ENCODE measurements at regions of chr19 and their contacts with region 1.

Region 1: GRCh38 chr19:39187559-39187957 is 9.2 kb upstream of the NCCRP1 start:
- DNase-seq: no peak
- ATAC-seq: peak in 3 of 4 donors; percentile 11 to 31 (median 22)
- H3K4me3 ChIP-seq: no peak overlapping the region
- H3K27ac ChIP-seq: no peak overlapping the region
- H3K4me1 ChIP-seq: no peaks in the 10 kb centered on the region
- H3K27me3 ChIP-seq: no peaks in the 10 kb centered on the region
- CTCF ChIP-seq: peak in 1 of 4 donors; percentile 2
- POLR2A ChIP-seq: no peak

Region 2: DNA sequence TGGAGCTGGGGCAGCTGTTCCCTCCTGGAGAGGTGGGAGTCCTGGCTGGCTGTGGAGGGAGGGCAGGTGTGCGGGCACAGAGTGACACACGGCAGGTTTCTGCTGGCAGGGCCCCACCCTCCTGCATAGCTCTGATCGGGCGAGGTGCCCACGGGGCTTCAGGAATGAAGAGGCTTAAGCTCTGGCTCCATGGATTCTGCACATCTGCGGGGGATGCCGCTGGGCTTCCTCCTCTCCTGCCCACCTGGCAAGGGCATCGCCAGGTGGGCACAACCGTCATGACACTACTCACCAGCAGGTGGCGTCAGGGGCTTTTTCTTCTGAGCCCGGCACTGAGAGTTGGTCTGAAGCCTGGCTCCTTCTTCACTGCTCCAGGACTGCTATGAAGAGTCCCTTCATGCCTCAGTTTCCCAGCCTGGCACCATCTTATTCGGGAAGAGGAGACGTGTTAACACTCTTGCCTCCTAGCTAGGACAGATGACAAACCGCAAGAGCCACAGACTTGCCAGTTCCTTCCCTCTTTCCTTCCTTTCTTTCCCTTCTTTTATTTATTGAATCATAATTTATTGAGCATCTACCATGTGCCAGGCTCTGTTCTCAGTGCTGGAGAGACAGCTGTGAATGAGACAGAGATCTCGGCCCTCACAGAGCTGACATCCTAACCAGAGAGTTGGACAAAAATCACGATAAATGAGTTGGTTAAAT is 77.1 kb before region 1 on chr19:
- intact Hi-C with region 1: loop called in 1 of 2 experiments (anchors 5 kb)
- DNase-seq: peak in 1 of 3 donors; percentile 76
- ATAC-seq: peak; percentile 45 to 65 (median 58)
- H3K4me3 ChIP-seq: no peak overlapping the region
- H3K27ac ChIP-seq: no peak overlapping the region
- H3K4me1 ChIP-seq: peaks cover 0 to 10% (median 4%) of the 10 kb centered on the region in 4 donors
- H3K27me3 ChIP-seq: no peaks in the 10 kb centered on the region
- CTCF ChIP-seq: peak; percentile 65 to 80 (median 76)
- POLR2A ChIP-seq: no peak

Region 3: DNA sequence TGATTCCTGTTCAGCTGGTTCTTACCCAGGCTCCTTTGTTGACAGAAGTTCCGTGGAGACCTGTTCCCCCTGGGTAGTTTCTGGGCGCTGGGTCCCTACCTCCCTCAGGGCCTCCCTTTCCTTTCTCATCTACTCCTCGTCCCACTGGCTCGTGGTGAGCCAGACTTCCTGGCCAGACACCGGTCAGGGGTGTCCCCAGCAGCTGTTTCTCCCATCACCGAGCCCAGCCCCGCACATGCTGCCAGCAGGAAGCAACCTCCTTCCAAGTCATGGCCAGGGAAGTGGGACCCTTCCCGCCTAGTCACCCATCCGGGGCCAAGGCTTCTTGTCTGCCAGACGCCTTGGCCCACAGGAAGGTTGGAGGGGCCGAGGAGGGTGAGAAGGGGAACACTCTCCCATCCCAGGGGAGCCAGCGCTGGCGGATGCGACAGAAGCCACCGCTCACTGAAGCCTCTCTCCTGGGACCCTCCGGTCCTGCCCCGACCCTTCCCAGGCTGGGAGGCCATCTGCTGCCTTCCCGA is 56.3 kb before region 1 on chr19:
- intact Hi-C with region 1: loop called (anchors 10 kb)
- DNase-seq: no peak
- ATAC-seq: no peak
- H3K4me3 ChIP-seq: no peak overlapping the region
- H3K27ac ChIP-seq: no peak overlapping the region
- H3K4me1 ChIP-seq: peaks cover 0 to 37% (median 16%) of the 10 kb centered on the region in 4 donors
- H3K27me3 ChIP-seq: no peaks in the 10 kb centered on the region
- CTCF ChIP-seq: no peak
- POLR2A ChIP-seq: no peak

Region 4: GRCh38 chr19:39237200-39238184 is 49.9 kb after region 1 on chr19:
- intact Hi-C with region 1: no loop called
- DNase-seq: peak; percentile 82 to 90 (median 84)
- ATAC-seq: peak; percentile 94 to 99 (median 98)
- H3K4me3 ChIP-seq: peak overlapping the region in 1 of 3 donors; percentile 4
- H3K27ac ChIP-seq: no peak overlapping the region
- H3K4me1 ChIP-seq: no peaks in the 10 kb centered on the region
- H3K27me3 ChIP-seq: no peaks in the 10 kb centered on the region
- CTCF ChIP-seq: no peak
- POLR2A ChIP-seq: no peak